RWPE1 (cell line): ENCODE measurements at regions of chr14 and their contacts with region 1.

Region 1: GRCh38 chr14:54902521-54903420 is at the start of gene GCH1:
- DNase-seq: peak; percentile 60
- H3K27ac ChIP-seq: peak within 1 kb of the TSS; percentile 57
- CTCF ChIP-seq: peak; percentile 50

Region 2: DNA sequence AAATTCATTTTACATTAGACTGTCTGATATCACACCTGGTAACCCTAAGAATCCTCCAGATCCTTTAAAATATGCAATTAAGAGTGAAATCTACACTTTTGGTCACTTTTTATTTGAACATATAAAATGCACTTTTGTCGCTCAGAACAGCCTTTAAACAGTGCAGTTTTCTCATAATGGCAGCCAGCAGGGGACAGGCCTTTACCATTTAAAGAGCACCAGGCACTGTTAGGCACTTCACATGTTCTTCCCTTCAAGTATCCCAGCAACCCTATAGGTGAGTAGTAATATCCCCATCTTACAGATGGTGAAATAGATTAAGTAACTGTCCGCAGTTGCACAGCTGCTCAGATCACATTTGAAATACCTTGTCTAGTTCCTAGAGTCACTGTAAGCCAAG is 347.1 kb before region 1 on chr14:
- CTCF ChIA-PET with region 1: interaction called, 4 read pairs
- POLR2A ChIA-PET with region 1: interaction called, 15 read pairs
- DNase-seq: no peak
- H3K27ac ChIP-seq: no peak overlapping the region
- CTCF ChIP-seq: no peak